ENCODE measurements at regions of chr22 and their contacts with region 1.

Region 1: DNA sequence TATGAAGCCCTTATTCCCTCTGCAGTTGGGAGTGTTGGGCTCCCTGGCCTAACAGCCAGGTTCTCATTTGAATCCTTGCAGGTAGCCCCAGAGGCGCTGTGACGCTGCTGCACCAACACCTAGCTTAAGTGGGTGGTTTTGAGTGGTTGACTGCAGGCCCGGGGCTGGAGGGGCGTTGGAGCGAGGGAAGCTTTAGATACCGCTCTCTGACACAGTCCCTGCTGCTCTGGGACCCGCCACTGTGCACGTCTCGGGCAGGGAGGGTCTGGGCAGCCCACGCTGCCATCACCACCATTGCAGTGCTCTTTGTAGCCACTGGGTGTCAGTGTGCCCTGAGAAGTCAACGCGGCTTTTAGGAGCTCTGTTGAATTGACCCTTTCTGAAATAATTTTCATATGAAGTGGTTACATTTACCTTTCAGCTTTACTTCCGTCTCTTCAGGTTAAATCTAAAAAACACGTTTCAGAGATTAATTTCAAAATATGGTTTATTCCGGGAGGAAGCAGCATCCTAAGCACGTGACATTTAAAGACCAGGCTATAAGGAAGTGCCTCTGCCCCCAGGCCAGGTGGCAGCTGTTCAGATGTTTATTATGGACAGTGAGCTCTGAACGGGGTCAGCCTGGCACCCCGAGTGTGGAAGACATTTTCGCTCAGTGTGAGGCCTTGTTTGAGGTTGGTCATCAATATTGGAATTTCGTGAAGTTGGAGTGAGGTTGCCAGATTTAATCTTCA is 30.9 kb upstream of the PARVB start:
- DNase-seq: peak; percentile 78
- ATAC-seq: peak; percentile 97
- H3K4me3 Mint-ChIP-seq: no peak overlapping the region
- H3K27ac Mint-ChIP-seq: no peak overlapping the region
- H3K4me1 Mint-ChIP-seq: no peaks in the 10 kb centered on the region
- H3K27me3 Mint-ChIP-seq: no peaks in the 10 kb centered on the region
- CTCF ChIP-seq: peak; percentile 93

Region 2: GRCh38 chr22:43862074-43862881 is 130.9 kb before region 1 on chr22 and contains the start of gene SULT4A1:
- CTCF ChIA-PET with region 1: no interaction called
- POLR2A ChIA-PET with region 1: no interaction called
- DNase-seq: peak; percentile 47
- ATAC-seq: peak; percentile 36
- H3K4me3 Mint-ChIP-seq: peak within 1 kb of the TSS; percentile 70
- H3K27ac Mint-ChIP-seq: peak within 1 kb of the TSS; percentile 65; the same call in 1 of the 2 replicates
- H3K4me1 Mint-ChIP-seq: peaks cover 28% of the 10 kb centered on the region
- H3K27me3 Mint-ChIP-seq: peaks cover 17% of the 10 kb centered on the region
- CTCF ChIP-seq: no peak
- total RNA-seq, gene SULT4A1: 12.5 to 13.0 TPM (median 12.6 TPM) in 3 replicates

Region 3: DNA sequence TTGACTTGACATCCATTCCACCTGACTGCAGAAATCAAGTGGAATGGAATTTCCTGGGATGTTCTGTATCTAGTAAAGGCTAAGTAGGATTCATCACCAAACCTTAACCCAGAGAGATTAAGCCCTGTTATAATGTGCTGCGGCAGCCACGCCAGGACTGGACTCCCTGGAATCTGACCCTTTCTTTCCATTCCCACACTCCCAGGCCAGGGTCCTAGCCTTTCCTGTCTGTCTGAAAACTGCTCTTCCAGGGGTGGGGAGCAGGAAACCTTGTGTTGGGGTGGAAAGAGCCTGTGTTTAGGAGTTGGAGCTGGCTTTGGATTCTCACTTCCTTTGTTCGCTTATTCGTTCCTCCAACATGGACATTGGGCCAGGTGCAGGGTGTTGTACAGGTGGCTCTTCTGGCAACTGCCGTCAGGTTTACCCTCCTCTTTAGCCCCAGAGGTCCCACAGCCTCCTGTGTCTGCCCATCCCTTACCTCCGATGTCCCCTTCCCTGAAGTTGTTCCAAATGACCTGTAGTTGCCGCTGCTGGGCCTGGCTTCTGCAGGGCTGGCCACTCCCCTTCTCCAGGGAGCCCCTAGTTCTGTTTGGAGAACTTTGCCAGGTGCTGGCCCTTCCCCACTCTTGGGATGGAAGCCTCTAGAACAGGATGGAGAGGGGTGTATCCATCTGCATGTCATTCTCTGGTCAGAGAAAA is 10.4 kb after region 1 on chr22:
- CTCF ChIA-PET with region 1: interaction called, 20 read pairs
- POLR2A ChIA-PET with region 1: no interaction called
- DNase-seq: peak; percentile 66
- ATAC-seq: peak; percentile 96
- H3K4me3 Mint-ChIP-seq: no peak overlapping the region
- H3K27ac Mint-ChIP-seq: no peak overlapping the region
- H3K4me1 Mint-ChIP-seq: peaks cover 4% of the 10 kb centered on the region
- H3K27me3 Mint-ChIP-seq: no peaks in the 10 kb centered on the region
- CTCF ChIP-seq: no peak

Region 4: DNA sequence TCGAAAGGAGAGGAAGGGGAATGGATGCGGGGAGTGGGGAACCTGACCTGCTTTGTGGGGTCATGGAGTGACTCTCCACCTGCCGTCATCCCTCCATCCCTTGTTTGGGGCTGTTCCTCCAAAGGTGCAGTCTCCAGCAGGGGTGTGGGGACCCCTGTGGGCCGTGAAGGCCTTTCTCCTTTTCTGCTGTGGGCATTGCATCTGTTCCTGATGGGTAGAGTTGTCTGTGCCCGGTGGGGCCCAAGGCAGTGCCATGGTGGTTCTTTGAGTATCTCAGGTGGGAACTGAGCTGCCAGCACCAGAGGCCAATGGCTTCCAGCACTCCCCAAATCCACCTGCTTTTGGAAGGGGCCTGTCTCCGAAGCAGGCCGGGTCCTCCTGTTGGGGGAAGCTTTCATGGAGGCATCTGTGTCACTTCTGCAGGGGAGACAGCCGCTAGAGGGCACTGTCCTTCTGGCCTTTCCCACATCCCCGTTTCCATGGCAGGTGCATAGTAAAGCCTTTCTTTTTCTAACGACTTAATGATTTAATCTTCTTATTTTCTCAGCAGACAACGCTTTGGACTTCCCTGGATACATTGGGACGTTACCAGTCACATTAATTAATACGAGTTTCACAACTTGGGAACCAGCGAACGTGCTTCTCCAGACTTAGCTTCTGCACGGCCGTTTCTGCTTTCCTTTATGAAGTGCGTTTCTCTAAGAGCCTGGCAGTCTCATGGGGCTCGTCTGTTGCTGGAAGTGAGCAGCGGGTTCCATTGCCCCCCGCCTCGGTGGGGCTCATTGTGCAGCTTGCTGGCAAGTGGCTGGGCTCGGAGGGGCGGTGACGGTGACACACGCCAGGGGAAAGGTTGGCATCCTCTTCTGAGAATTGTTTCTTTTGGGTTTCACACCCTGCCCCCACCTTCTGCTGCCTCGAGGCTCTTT is 88.0 kb after region 1 on chr22:
- CTCF ChIA-PET with region 1: interaction called, 80 read pairs
- POLR2A ChIA-PET with region 1: no interaction called
- DNase-seq: peak; percentile 87
- ATAC-seq: peak; percentile 77
- H3K4me3 Mint-ChIP-seq: no peak overlapping the region
- H3K27ac Mint-ChIP-seq: no peak overlapping the region
- H3K4me1 Mint-ChIP-seq: peaks cover 19% of the 10 kb centered on the region
- H3K27me3 Mint-ChIP-seq: no peaks in the 10 kb centered on the region
- CTCF ChIP-seq: peak; percentile 85

Region 5: GRCh38 chr22:44369293-44369652 is 376.1 kb after region 1 on chr22:
- CTCF ChIA-PET with region 1: interaction called, 16 read pairs
- POLR2A ChIA-PET with region 1: no interaction called
- DNase-seq: peak; percentile 77
- ATAC-seq: peak; percentile 87
- H3K4me3 Mint-ChIP-seq: no peak overlapping the region
- H3K27ac Mint-ChIP-seq: no peak overlapping the region
- H3K4me1 Mint-ChIP-seq: no peaks in the 10 kb centered on the region
- H3K27me3 Mint-ChIP-seq: no peaks in the 10 kb centered on the region
- CTCF ChIP-seq: peak; percentile 49

Region 6: GRCh38 chr22:44444341-44445301 is 451.4 kb after region 1 on chr22:
- CTCF ChIA-PET with region 1: interaction called, 18 read pairs
- POLR2A ChIA-PET with region 1: no interaction called
- DNase-seq: peak; percentile 68
- ATAC-seq: peak; percentile 80
- H3K4me3 Mint-ChIP-seq: no peak overlapping the region
- H3K27ac Mint-ChIP-seq: no peak overlapping the region
- H3K4me1 Mint-ChIP-seq: 0 out of 2 replicates have a peak, but pooled peaks cover 3% of the 10 kb centered on the region
- H3K27me3 Mint-ChIP-seq: no peaks in the 10 kb centered on the region
- CTCF ChIP-seq: 0 out of 2 replicates have a peak, but pooled peaks have one; percentile 39